ENCODE measurements at regions of chr11 and their contacts with region 1.

Region 1: GRCh38 chr11:4607781-4608666 is at the start of gene TRIM68:
- DNase-seq: peak; percentile 96
- H3K4me3 ChIP-seq: peak within 1 kb of the TSS; percentile 73 to 79
- H3K27ac ChIP-seq: peak within 1 kb of the TSS; percentile 80 to 89
- H3K4me1 ChIP-seq: peaks cover 0 to 10% of the 10 kb centered on the region in 2 experiments; a peak in 3 of 4 replicates
- H3K27me3 ChIP-seq: no peaks in the 10 kb centered on the region
- CTCF ChIP-seq: no peak
- EP300 ChIP-seq: no peak
- RAD21 ChIP-seq: no peak
- polyA plus RNA-seq, gene TRIM68: 4.9 and 6.1 TPM in 2 replicates

Region 2: DNA sequence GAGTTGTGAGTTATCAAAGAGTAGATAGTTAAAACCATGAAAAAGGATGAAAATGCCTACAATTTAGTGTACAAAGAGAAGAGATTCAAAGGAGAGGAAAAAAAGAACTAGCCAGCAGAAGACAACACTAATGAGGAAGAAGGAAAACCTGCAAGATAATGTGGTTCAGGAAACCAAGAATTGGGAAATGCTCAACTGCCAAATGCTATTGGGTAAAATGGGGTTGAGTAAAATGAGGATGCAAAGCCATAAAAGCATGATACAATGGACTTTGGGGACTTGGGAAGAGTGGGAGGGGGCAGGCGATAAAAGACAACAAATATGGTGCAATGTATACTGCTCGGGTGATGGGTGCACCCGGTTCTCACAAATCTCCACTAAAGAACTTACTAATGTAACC is 166.5 kb before region 1 on chr11:
- CTCF ChIA-PET with region 1: no interaction called
- POLR2A ChIA-PET with region 1: no interaction called
- DNase-seq: no peak
- H3K4me3 ChIP-seq: no peak overlapping the region
- H3K27ac ChIP-seq: no peak overlapping the region
- H3K4me1 ChIP-seq: no peaks in the 10 kb centered on the region
- H3K27me3 ChIP-seq: no peaks in the 10 kb centered on the region
- CTCF ChIP-seq: no peak
- EP300 ChIP-seq: no peak
- RAD21 ChIP-seq: no peak

Region 3: GRCh38 chr11:4626207-4627099 is 18.4 kb after region 1 on chr11:
- CTCF ChIA-PET with region 1: interaction called, 12 read pairs
- POLR2A ChIA-PET with region 1: no interaction called
- DNase-seq: peak; percentile 31
- H3K4me3 ChIP-seq: peak overlapping the region in 1 of 2 experiments; percentile 5; a peak in 1 of 4 replicates
- H3K27ac ChIP-seq: no peak overlapping the region
- H3K4me1 ChIP-seq: no peaks in the 10 kb centered on the region
- H3K27me3 ChIP-seq: peaks cover 18% of the 10 kb centered on the region
- CTCF ChIP-seq: peak; percentile 69
- EP300 ChIP-seq: no peak
- RAD21 ChIP-seq: peak; percentile 76